Dorsolateral prefrontal cortex (tissue), 120 donors: ENCODE measurements at regions of chr18 and their contacts with region 1.

Region 1: DNA sequence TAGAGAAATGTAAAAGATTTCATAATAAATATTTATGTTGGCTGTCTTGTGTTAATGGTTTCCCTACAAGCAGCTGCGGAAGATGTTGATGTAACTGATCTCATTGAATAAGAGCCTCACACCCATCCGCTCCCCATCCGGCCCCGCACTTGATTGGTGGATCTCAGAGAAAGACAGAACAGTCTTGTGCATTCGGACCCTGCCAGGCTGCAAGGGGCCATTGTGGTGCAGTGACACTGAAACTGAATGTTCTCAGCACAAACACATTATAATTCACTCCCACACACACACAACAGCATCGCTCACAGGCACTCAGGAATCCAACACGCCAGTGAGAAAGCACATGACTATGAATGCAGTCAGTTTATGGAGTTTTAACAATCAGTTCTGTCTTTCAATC is 47.8 kb downstream of the PRELID3A start:
- DNase-seq: peak; percentile 35 to 99 (median 93)
- H3K4me3 ChIP-seq: peak overlapping the region in 31 of 59 donors; percentile 0 to 53 (median 19)
- H3K27ac ChIP-seq: peak overlapping the region; percentile 5 to 99 (median 93)
- H3K27me3 ChIP-seq: no peaks in the 10 kb centered on the region
- CTCF ChIP-seq: peak in 10 of 56 donors; percentile 9 to 29 (median 22)

Region 2: DNA sequence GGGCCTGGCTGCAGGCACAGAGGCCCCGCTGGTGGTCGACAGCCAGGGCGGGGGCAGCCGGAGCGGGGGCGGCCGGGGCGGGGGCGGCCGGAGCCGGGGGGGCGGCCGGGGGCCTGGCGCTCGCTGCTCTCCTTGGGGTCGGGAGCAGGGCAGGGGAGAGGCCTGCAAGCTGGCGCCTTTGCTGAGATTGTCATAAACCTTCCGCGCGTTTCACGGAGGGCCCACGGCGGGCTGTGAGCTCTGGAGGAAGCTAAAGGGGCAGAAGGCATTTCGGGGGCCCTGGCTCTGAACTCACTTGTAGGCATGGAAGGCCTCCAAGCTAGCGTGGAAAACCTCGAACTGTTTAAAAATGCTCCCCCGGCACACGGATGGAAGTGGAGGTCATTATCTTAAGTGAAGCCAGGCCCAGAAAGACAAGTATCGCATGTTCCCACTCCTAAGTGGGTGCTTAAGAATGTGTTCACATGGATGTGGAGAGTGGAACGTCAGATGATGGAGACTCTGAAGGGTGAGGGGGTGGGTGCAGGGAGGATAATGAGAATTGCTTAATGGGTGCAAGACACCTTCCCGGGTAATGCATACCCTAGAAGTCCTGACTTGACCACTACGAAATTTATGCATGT is 47.1 kb before region 1 on chr18:
- intact Hi-C with region 1: loop called (anchors 5 kb)
- DNase-seq: peak in 1 of 10 donors; percentile 15
- H3K4me3 ChIP-seq: peak overlapping the region; percentile 50 to 78 (median 67)
- H3K27ac ChIP-seq: peak overlapping the region in 56 of 59 donors; percentile 64 to 97 (median 90)
- H3K27me3 ChIP-seq: no peaks in the 10 kb centered on the region
- CTCF ChIP-seq: no peak

Region 3: GRCh38 chr18:12507007-12507406 is 51.5 kb after region 1 on chr18:
- intact Hi-C with region 1: no loop called
- DNase-seq: no peak
- H3K4me3 ChIP-seq: no peak overlapping the region
- H3K27ac ChIP-seq: no peak overlapping the region
- H3K27me3 ChIP-seq: no peaks in the 10 kb centered on the region
- CTCF ChIP-seq: no peak

Region 4: GRCh38 chr18:12621737-12622306 is 166.3 kb after region 1 on chr18:
- intact Hi-C with region 1: no loop called
- DNase-seq: no peak
- H3K4me3 ChIP-seq: no peak overlapping the region
- H3K27ac ChIP-seq: no peak overlapping the region
- H3K27me3 ChIP-seq: no peaks in the 10 kb centered on the region
- CTCF ChIP-seq: no peak